Mammary epithelial cell (primary cell): ENCODE measurements at regions of chr1 and their contacts with region 1.

Region 1: DNA sequence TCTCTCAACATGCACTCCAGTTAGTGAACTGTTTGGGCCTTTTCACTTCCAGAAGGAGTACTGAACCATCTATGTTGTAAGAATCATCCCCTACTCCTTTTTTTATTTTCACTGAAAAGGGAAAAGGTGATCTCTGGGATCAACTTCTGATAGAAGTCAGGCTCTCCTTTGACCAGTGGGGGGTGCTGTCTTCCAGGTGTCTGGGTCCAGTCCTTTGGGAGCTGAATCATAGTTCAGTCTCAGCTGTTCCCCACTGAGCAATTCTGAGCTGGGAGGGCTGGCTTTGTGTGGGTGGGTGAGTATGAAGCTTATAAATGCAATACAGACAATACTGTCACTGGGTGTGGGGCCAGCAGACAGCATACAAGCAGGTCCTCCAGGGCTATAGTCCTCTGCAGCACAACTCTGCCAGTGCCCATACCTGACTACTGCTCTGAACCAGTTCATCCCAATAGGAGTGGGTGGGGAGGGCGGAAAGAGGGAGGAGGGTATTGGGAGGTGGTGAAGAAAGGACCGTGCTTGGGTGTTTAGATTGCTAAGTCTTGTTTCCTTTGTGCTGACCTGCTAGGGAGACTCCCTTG is 12.5 kb upstream of the SARS1 start:
- DNase-seq: peak; percentile 93
- H3K4me3 ChIP-seq: no peak overlapping the region
- H3K27ac ChIP-seq: peak overlapping the region; percentile 40
- H3K4me1 ChIP-seq: peaks cover 35% of the 10 kb centered on the region
- H3K27me3 ChIP-seq: no peaks in the 10 kb centered on the region
- CTCF ChIP-seq: peak; percentile 85 to 91

Region 2: GRCh38 chr1:108780937-108781574 is 420.2 kb before region 1 on chr1:
- CTCF ChIA-PET with region 1: no interaction called
- dilution Hi-C with region 1: no loop called
- in situ Hi-C with region 1: no loop called
- intact Hi-C with region 1: no loop called
- DNase-seq: no peak
- H3K4me3 ChIP-seq: no peak overlapping the region
- H3K27ac ChIP-seq: no peak overlapping the region
- H3K4me1 ChIP-seq: no peaks in the 10 kb centered on the region
- H3K27me3 ChIP-seq: no peaks in the 10 kb centered on the region
- CTCF ChIP-seq: no peak

Region 3: DNA sequence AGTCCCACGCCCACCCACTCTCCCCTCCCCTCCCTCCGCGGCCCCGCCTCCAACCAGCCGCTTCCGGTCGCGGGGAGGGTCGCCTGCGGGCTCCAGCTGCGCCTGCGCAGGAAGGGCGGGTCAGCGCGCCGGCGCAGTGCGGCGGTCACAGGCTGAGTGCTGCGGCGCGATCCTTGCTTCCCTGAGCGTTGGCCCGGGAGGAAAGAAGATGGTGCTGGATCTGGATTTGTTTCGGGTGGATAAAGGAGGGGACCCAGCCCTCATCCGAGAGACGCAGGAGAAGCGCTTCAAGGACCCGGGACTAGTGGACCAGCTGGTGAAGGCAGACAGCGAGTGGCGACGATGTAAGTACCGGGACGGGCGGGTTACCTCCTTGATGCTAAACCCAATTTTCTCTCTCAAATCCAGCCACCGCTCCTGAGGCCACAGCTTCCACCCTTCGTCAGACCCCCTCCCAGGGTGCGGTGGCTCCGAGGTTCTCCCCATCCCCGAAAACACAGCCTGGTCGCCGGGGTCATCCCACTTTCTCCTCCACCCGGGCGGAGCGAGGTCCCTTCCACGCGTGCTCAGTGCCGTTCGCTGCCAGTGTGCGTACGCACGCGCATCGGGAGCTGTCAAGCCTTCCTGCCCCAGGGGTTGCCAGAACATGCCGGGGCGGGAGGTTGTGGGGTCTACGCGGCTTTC is 12.7 kb after region 1 on chr1 and contains the start of gene SARS1:
- CTCF ChIA-PET with region 1: no interaction called
- dilution Hi-C with region 1: no loop called
- in situ Hi-C with region 1: no loop called
- intact Hi-C with region 1: loop called (anchors 1 kb)
- DNase-seq: peak; percentile 77
- H3K4me3 ChIP-seq: peak within 1 kb of the TSS; percentile 74 to 95 (median 94)
- H3K27ac ChIP-seq: peak within 1 kb of the TSS; percentile 97
- H3K4me1 ChIP-seq: peaks cover 38% of the 10 kb centered on the region
- H3K27me3 ChIP-seq: no peaks in the 10 kb centered on the region
- CTCF ChIP-seq: no peak
- total RNA-seq, gene SARS1: 349 to 468 TPM

Region 4: DNA sequence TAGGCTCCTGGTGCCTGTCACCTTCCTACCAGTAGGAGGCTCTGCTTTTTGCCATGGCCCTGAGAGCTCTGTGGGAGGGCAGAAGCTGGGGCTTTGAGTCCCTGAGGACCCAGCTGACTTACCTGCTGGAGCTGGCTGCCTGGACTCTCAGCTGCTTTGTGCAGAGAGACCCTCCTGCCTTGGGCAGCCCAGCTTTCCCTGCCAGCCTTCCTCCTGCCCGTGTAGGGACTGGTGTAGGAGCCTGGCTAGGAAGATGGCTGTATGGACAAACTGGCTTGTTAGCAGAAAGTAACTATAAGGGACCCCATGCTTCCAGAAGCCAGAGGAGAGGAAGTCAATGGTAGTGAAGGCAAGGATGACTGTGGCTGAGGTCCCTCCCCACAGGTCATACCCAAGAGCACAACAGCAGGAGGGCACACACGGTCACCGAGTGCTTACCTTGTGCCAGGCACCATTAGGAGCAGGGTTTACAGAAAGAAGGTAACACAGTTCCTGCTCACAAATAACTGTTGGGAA is 38.4 kb after region 1 on chr1:
- CTCF ChIA-PET with region 1: interaction called, 11 read pairs
- dilution Hi-C with region 1: loop called (anchors 5 kb)
- in situ Hi-C with region 1: no loop called
- intact Hi-C with region 1: loop called (anchors 1 kb)
- DNase-seq: peak; percentile 61
- H3K4me3 ChIP-seq: no peak overlapping the region
- H3K27ac ChIP-seq: peak overlapping the region; percentile 95
- H3K4me1 ChIP-seq: peaks cover 33% of the 10 kb centered on the region
- H3K27me3 ChIP-seq: no peaks in the 10 kb centered on the region
- CTCF ChIP-seq: peak; percentile 55 to 81

Region 5: DNA sequence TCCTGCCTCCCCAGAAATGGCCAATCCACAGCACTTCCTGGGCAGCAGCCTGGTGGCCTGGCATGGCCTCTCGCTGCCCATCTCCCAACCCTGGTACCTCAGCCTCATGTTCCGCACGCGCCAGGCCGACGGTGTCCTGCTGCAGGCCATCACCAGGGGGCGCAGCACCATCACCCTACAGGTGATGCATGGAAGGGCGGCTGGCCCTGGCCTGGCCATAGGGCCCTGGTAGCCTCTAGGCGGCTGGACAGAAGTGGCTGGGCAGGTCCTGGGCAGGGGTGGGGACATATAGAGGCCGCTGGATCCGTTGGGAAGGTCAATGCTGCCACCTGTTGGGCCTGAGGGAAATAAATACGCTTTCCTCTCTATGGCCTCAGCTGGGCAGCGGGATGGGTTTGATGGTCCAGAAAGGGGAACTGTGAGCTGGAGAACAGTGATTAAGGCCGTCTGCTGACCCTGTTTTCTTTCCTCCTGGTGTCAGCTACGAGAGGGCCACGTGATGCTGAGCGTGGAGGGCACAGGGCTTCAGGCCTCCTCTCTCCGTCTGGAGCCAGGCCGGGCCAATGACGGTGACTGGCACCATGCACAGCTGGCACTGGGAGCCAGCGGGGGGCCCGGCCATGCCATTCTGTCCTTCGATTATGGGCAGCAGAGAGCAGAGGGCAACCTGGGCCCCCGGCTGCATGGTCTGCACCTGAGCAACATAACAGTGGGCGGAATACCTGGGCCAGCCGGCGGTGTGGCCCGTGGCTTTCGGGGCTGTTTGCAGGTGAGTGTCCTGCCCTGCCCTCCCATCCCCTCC is 62.6 kb after region 1 on chr1:
- CTCF ChIA-PET with region 1: interaction called, 3 read pairs
- dilution Hi-C with region 1: no loop called
- in situ Hi-C with region 1: loop called in 1 of 2 experiments (anchors 5 kb)
- intact Hi-C with region 1: loop called (anchors 1 kb)
- DNase-seq: no peak
- H3K4me3 ChIP-seq: no peak overlapping the region
- H3K27ac ChIP-seq: peak overlapping the region; percentile 40
- H3K4me1 ChIP-seq: peaks cover 32% of the 10 kb centered on the region
- H3K27me3 ChIP-seq: no peaks in the 10 kb centered on the region
- CTCF ChIP-seq: peak; percentile 100

Region 6: DNA sequence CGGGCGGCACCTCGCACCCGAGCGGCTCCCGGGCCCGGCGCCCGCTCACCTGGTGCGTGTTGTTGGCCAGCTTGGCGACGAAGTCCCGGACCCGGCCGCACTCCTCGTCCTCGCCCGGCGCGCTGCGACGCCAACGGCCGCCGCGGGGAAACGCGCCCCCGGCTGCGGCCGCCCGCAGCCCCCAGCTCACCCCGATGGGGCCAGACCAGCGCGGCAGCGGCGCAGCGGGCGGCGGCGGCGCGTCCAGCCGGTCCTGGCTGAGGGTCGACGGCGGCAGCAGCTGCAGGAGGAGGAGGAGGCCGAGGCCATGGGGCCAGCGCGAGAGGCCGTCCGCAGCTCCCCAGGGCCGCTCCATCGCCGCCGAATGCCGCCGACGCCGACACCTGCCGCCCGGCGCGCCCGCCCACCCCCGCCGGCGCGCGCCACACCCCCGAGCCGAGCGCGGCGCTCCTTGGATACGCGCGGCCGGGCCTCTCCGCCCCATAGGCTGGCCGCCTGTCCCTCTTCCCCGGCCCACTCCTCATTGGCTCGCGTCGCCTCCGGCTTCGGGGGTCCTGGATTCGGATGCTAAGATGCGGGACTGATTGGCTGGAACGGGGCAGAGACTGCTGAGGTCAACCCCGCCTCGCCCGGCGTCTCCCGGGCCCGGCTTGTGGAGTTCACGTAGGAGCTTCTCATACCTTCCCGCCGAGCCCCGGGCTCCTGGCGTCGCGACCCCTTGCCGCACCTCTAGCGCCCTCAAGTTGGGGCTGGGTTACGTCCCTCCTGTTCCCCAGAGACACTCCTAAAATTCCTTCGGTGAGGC is 196.5 kb after region 1 on chr1 and contains the start of gene SORT1:
- CTCF ChIA-PET with region 1: interaction called, 12 read pairs
- dilution Hi-C with region 1: loop called (anchors 5 kb)
- in situ Hi-C with region 1: loop called (anchors 5 to 10 kb)
- intact Hi-C with region 1: loop called (anchors 1 kb)
- DNase-seq: peak; percentile 77
- H3K4me3 ChIP-seq: peak within 1 kb of the TSS; percentile 54 to 73 (median 65)
- H3K27ac ChIP-seq: peak within 1 kb of the TSS; percentile 16
- H3K4me1 ChIP-seq: peaks cover 20% of the 10 kb centered on the region
- H3K27me3 ChIP-seq: no peaks in the 10 kb centered on the region
- CTCF ChIP-seq: no peak
- total RNA-seq, gene SORT1: 24.6 to 41.8 TPM

Region 7: GRCh38 chr1:109532365-109533136 is 331.3 kb after region 1 on chr1:
- CTCF ChIA-PET with region 1: no interaction called
- dilution Hi-C with region 1: no loop called
- in situ Hi-C with region 1: no loop called
- intact Hi-C with region 1: loop called (anchors 1 kb)
- DNase-seq: peak; percentile 37
- H3K4me3 ChIP-seq: peak overlapping the region in 1 of 3 experiments; percentile 28
- H3K27ac ChIP-seq: no peak overlapping the region
- H3K4me1 ChIP-seq: peaks cover 12% of the 10 kb centered on the region
- H3K27me3 ChIP-seq: no peaks in the 10 kb centered on the region
- CTCF ChIP-seq: peak; percentile 92 to 99